MCF 10A (cell line): ENCODE measurements at regions of chr1 and their contacts with region 1.

Region 1: DNA sequence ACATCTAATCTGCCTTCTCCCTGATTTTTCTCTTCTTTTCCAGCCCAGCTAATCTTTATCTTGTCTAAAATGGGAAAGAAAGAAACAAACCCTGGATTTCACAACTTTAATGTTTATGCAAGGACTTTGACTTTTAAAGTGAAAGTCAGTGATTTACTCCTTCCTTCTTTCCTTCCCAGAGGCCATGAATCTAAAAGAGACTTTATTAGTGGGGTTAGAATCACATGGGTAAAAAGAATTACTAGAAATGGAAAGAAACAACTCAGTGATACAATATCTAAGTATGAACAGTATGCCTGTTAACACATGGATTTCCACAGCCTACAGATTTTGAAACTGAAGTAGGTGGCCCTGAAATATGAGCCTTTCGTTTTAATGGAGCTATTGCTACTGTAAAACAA is 59.8 kb upstream of the KCNK2 start:
- DNase-seq: peak; percentile 76
- H3K4me3 Mint-ChIP-seq: peak overlapping the region; percentile 56
- H3K27ac Mint-ChIP-seq: peak overlapping the region; percentile 97
- H3K4me1 Mint-ChIP-seq: peaks cover 40% of the 10 kb centered on the region
- H3K27me3 Mint-ChIP-seq: no peaks in the 10 kb centered on the region
- CTCF ChIP-seq: no peak

Region 2: GRCh38 chr1:214727274-214727673 is 295.5 kb before region 1 on chr1:
- CTCF ChIA-PET with region 1: no interaction called
- POLR2A ChIA-PET with region 1: no interaction called
- intact Hi-C with region 1: no loop called
- DNase-seq: no peak
- H3K4me3 Mint-ChIP-seq: no peak overlapping the region
- H3K27ac Mint-ChIP-seq: no peak overlapping the region
- H3K4me1 Mint-ChIP-seq: no peaks in the 10 kb centered on the region
- H3K27me3 Mint-ChIP-seq: peaks cover 62% of the 10 kb centered on the region
- CTCF ChIP-seq: no peak

Region 3: DNA sequence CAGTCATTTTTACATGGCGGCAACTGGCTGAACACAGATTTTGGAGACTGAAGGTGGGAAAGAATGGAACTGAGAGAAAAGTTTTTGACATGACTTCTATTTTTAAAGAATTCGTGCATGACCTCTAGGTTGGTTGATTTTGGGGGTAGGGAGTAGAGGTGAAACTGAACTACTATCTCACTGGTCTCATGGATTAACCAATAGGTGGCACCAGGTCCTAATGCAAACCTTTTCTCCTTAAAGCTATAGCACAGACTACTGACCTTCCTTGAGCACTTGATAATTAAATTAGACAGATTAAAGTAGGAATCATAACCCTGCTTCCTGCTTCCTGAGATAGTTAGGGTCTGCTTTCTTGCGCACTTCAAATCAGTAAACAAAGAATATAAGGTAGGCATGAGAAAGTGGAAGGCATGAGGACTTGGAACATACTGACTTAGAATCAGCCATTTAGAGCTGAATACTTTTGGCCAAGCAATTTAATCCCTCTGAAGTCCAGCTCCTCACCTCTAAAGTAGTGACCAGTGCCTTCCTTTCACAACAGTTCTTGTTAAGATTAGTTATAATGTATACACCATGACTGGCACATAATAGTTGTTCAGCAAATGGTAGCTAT is 213.8 kb before region 1 on chr1:
- CTCF ChIA-PET with region 1: interaction called, 5 read pairs
- POLR2A ChIA-PET with region 1: interaction called, 12 read pairs
- intact Hi-C with region 1: no loop called
- DNase-seq: peak; percentile 84
- H3K4me3 Mint-ChIP-seq: no peak overlapping the region
- H3K27ac Mint-ChIP-seq: no peak overlapping the region
- H3K4me1 Mint-ChIP-seq: no peaks in the 10 kb centered on the region
- H3K27me3 Mint-ChIP-seq: no peaks in the 10 kb centered on the region
- CTCF ChIP-seq: peak; percentile 93

Region 4: GRCh38 chr1:214957330-214958137 is 65.2 kb before region 1 on chr1:
- CTCF ChIA-PET with region 1: interaction called, 3 read pairs
- POLR2A ChIA-PET with region 1: interaction called, 35 read pairs
- intact Hi-C with region 1: no loop called
- DNase-seq: peak; percentile 98
- H3K4me3 Mint-ChIP-seq: peak overlapping the region; percentile 38
- H3K27ac Mint-ChIP-seq: peak overlapping the region; percentile 93
- H3K4me1 Mint-ChIP-seq: peaks cover 23% of the 10 kb centered on the region
- H3K27me3 Mint-ChIP-seq: no peaks in the 10 kb centered on the region
- CTCF ChIP-seq: no peak

Region 5: DNA sequence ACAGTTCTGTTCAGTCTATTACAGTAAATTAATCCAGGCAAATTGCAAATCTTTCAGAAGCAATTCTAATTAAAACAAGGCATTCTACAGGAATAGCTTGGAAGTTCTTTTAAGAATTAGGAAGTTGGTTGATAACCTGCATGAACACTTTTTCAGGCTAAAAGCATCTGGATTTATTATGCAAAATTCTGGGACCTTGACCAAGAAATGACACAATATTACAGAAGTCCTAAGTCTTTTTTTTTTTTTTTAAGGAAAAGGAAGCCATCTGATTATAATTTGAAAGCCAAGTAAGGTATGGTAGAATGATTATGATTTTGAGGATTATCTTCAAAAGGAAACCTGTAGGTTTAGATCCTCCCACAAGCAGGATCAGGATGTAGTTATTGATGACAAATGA is 14.9 kb before region 1 on chr1:
- CTCF ChIA-PET with region 1: interaction called, 10 read pairs
- POLR2A ChIA-PET with region 1: interaction called, 59 read pairs
- intact Hi-C with region 1: no loop called
- DNase-seq: peak; percentile 44
- H3K4me3 Mint-ChIP-seq: no peak overlapping the region
- H3K27ac Mint-ChIP-seq: no peak overlapping the region
- H3K4me1 Mint-ChIP-seq: peaks cover 26% of the 10 kb centered on the region
- H3K27me3 Mint-ChIP-seq: no peaks in the 10 kb centered on the region
- CTCF ChIP-seq: no peak

Region 6: DNA sequence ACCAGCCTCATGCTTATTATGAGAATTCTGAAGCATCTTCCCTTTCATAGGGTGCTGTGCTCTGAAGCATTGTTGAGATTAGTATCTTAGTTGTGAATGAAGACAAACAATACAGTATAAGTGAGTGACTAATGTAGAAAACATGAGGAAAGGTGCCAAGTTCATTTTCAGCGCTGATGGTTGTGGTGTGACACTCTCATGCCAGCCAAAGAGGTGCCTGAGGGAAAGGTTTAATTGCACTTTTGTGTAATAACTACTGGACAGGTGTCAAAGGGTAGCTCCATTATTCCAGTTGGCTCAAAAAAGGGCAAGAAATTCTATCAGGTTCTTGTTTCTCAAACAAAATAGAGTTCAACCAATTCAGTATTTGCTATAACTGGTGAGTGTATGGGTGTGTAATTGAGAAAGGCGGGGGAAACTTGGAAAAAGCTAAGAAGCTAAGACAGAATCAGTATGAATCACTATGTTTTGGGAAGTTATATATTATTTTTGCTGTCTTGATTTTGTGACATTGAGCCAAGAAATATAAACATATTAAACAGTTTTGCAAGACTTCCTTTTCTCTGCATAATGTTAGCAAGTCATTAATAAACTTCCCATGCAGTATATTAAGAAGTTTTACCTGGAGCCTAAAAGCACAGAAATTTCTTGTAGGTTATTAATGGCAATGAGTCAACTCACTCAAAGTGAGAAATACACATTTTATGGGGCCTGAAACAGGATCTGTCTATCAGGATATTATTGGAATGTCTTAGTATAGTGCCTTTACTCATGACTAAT is 91.6 kb after region 1 on chr1:
- CTCF ChIA-PET with region 1: interaction called, 9 read pairs
- POLR2A ChIA-PET with region 1: interaction called, 49 read pairs
- intact Hi-C with region 1: no loop called
- DNase-seq: peak; percentile 100
- H3K4me3 Mint-ChIP-seq: peak overlapping the region; percentile 45
- H3K27ac Mint-ChIP-seq: peak overlapping the region; percentile 91
- H3K4me1 Mint-ChIP-seq: peaks cover 56% of the 10 kb centered on the region
- H3K27me3 Mint-ChIP-seq: no peaks in the 10 kb centered on the region
- CTCF ChIP-seq: no peak

Region 7: GRCh38 chr1:215132156-215132555 is 109.4 kb after region 1 on chr1:
- CTCF ChIA-PET with region 1: interaction called, 5 read pairs
- POLR2A ChIA-PET with region 1: interaction called, 51 read pairs
- intact Hi-C with region 1: no loop called
- DNase-seq: peak; percentile 44
- H3K4me3 Mint-ChIP-seq: no peak overlapping the region
- H3K27ac Mint-ChIP-seq: no peak overlapping the region
- H3K4me1 Mint-ChIP-seq: peaks cover 21% of the 10 kb centered on the region
- H3K27me3 Mint-ChIP-seq: no peaks in the 10 kb centered on the region
- CTCF ChIP-seq: no peak

Region 8: GRCh38 chr1:215215846-215216245 is 193.1 kb after region 1 on chr1:
- CTCF ChIA-PET with region 1: no interaction called
- POLR2A ChIA-PET with region 1: no interaction called
- intact Hi-C with region 1: no loop called
- DNase-seq: no peak
- H3K4me3 Mint-ChIP-seq: no peak overlapping the region
- H3K27ac Mint-ChIP-seq: no peak overlapping the region
- H3K4me1 Mint-ChIP-seq: no peaks in the 10 kb centered on the region
- H3K27me3 Mint-ChIP-seq: no peaks in the 10 kb centered on the region
- CTCF ChIP-seq: no peak

Region 9: GRCh38 chr1:215475796-215476560 is 453.2 kb after region 1 on chr1:
- CTCF ChIA-PET with region 1: no interaction called
- POLR2A ChIA-PET with region 1: interaction called, 21 read pairs
- intact Hi-C with region 1: no loop called
- DNase-seq: peak; percentile 81
- H3K4me3 Mint-ChIP-seq: peak overlapping the region; percentile 10
- H3K27ac Mint-ChIP-seq: peak overlapping the region; percentile 88
- H3K4me1 Mint-ChIP-seq: peaks cover 39% of the 10 kb centered on the region
- H3K27me3 Mint-ChIP-seq: no peaks in the 10 kb centered on the region
- CTCF ChIP-seq: no peak